Activated CD4-positive, alpha-beta memory T cell treated with anti-CD3 and anti-CD28 coated beads for 36 hours (primary cell): ENCODE measurements at regions of chr4 and their contacts with region 1.

Region 1: DNA sequence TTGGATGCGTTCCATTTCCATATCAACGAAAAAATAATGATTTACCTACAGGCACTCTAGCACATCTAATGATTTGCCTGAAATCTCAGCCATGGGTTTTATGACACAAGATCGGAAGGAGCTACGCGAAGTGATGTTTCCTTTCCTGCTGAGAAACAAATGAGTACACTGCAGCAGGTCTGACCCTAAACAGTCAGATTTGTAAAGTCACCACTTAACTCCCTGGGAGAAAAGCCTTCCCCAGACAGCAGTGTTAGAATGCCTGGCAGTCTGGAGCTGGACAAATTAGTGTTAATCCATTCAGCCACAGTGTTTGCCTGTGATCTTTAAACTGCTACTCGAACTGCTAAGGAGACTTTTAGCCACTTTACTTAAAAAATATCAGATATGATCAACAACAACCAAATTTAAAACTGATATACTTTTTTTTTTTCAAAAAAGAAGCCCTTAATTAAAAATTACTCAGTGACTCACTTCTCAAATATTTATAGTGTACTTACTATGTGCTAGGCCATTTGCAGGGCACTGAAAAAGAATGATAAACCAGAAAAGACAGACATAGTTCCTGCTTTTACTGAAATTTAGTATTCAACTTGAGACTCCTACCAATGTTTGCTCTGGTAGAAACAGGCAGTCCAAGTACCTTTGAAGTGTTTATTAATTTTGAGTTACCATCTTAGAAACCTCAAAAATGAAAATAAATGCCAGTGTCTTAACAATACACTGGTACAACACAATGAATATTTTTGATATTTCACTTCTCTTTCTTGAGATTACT is 104.5 kb downstream of the SHISA3 start:
- DNase-seq: no peak
- H3K4me3 Mint-ChIP-seq: no peak overlapping the region
- H3K27ac Mint-ChIP-seq: no peak overlapping the region
- H3K4me1 Mint-ChIP-seq: no peaks in the 10 kb centered on the region
- H3K27me3 Mint-ChIP-seq: no peaks in the 10 kb centered on the region

Region 2: GRCh38 chr4:42282081-42282901 is 219.5 kb before region 1 on chr4:
- CTCF ChIA-PET with region 1: no interaction called
- POLR2A ChIA-PET with region 1: no interaction called
- intact Hi-C with region 1: no loop called
- DNase-seq: peak; percentile 25
- H3K4me3 Mint-ChIP-seq: no peak overlapping the region
- H3K27ac Mint-ChIP-seq: no peak overlapping the region
- H3K4me1 Mint-ChIP-seq: peaks cover 5% of the 10 kb centered on the region
- H3K27me3 Mint-ChIP-seq: peaks cover 9% of the 10 kb centered on the region

Region 3: DNA sequence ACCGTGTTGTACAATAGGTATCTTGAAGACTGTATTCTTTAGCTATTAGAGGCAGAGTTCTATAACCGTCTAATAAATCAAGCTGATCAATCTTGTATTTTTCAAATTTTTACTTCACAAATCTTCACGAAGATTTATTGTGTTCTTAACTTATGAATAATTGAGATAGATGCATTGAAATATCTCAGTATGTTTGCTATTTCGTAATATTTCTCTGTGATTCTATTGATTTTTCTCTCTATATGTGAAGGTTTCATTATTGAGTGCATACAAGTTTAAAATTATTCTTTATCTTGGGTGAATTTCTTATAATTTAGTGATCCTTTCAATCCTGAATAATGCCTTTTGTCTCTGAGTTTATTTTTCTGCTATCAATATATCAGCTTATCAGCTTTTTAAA is 124.3 kb before region 1 on chr4:
- CTCF ChIA-PET with region 1: no interaction called
- POLR2A ChIA-PET with region 1: no interaction called
- intact Hi-C with region 1: loop called (anchors 5 kb)
- DNase-seq: no peak
- H3K4me3 Mint-ChIP-seq: no peak overlapping the region
- H3K27ac Mint-ChIP-seq: no peak overlapping the region
- H3K4me1 Mint-ChIP-seq: no peaks in the 10 kb centered on the region
- H3K27me3 Mint-ChIP-seq: peaks cover 14% of the 10 kb centered on the region

Region 4: DNA sequence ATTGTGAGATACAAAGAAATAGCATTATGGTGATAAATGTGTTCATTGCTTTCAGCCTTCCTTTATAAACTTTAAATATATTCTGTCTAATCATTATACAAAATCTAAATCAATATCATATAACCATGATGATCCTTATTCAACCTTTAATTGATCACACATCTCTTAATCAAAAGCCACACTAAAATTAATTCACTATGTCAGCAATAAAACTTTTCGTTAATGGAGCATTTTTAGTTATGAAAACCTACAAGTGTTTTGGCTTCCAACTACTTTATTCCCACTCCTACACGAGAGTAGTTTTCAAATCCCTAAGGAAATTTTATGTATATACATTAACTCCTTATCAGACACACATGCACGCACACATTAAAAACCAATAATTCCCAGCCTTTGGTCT is 1416.6 kb after region 1 on chr4:
- CTCF ChIA-PET with region 1: no interaction called
- POLR2A ChIA-PET with region 1: no interaction called
- intact Hi-C with region 1: no loop called
- DNase-seq: no peak
- H3K4me3 Mint-ChIP-seq: no peak overlapping the region
- H3K27ac Mint-ChIP-seq: no peak overlapping the region
- H3K4me1 Mint-ChIP-seq: no peaks in the 10 kb centered on the region
- H3K27me3 Mint-ChIP-seq: no peaks in the 10 kb centered on the region